PC-3 (cell line): ENCODE measurements at regions of chr4 and their contacts with region 1.

Region 1: GRCh38 chr4:108543359-108543968 is 76.9 kb upstream of the RPL34 start:
- DNase-seq: no peak
- ATAC-seq: no peak
- H3K4me3 ChIP-seq: no peak overlapping the region
- H3K27ac ChIP-seq: no peak overlapping the region
- H3K4me1 ChIP-seq: peaks cover 5% of the 10 kb centered on the region; the same call in 1 of the 2 replicates
- H3K27me3 ChIP-seq: no peaks in the 10 kb centered on the region
- CTCF ChIP-seq: no peak

Region 2: DNA sequence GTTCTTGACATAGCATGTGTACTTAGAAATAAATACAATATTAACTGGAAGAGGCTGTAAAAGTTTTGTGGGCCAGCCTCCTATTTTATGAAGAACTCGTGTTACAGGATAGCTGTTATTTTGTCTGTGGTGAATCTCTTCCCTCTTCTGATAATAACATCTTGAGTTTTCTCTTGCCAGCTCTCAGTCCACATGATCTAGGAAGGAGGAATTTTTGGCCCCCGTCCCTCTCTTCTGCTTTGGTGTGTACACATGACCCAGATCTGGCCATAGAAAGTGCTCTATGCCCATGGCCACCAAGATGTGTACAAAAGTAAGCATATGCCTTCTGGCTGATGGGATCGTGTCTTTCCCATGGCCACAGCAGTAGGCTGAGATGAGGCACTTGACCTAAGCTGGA is 266.8 kb before region 1 on chr4:
- CTCF ChIA-PET with region 1: no interaction called
- POLR2A ChIA-PET with region 1: no interaction called
- intact Hi-C with region 1: no loop called
- DNase-seq: no peak
- ATAC-seq: no peak
- H3K4me3 ChIP-seq: no peak overlapping the region
- H3K27ac ChIP-seq: no peak overlapping the region
- H3K4me1 ChIP-seq: no peaks in the 10 kb centered on the region
- H3K27me3 ChIP-seq: no peaks in the 10 kb centered on the region
- CTCF ChIP-seq: no peak

Region 3: DNA sequence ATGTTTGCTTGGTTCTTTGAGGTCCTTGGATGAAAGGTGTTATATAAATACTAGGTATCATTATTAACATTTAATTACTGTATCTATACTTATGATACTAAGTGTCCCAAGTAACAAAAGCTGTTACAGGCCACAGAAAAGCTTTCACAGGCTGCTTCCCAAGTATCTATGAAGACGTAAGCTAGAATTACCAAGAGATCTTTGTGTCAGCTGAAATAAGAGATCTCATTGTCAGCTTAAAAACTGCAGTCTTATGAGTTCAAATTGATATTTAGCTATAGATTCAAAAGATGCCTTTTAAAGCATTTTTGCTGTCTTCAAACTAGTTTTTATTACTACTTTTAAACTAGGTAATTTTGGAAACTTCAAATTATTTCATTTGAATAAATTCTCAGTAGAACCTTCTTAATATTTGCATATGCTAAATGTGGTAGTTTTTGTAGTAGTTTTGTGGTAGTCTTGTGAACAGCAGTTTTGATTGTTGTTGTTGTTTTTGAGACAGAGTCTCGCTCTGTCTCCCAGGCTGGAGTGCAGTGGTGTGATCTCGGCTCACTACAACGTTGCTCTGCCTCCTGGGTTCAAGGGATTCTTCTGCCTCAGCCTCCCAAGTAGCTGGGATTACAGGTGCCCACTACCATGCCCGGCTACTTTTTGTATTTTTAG is 93.1 kb before region 1 on chr4:
- CTCF ChIA-PET with region 1: interaction called, 8 read pairs
- POLR2A ChIA-PET with region 1: interaction called, 14 read pairs
- intact Hi-C with region 1: no loop called
- DNase-seq: no peak
- ATAC-seq: no peak
- H3K4me3 ChIP-seq: no peak overlapping the region
- H3K27ac ChIP-seq: no peak overlapping the region
- H3K4me1 ChIP-seq: no peaks in the 10 kb centered on the region
- H3K27me3 ChIP-seq: no peaks in the 10 kb centered on the region
- CTCF ChIP-seq: no peak